Lower leg skin (tissue), 4 donors: ENCODE measurements at regions of chr5 and their contacts with region 1.

Region 1: DNA sequence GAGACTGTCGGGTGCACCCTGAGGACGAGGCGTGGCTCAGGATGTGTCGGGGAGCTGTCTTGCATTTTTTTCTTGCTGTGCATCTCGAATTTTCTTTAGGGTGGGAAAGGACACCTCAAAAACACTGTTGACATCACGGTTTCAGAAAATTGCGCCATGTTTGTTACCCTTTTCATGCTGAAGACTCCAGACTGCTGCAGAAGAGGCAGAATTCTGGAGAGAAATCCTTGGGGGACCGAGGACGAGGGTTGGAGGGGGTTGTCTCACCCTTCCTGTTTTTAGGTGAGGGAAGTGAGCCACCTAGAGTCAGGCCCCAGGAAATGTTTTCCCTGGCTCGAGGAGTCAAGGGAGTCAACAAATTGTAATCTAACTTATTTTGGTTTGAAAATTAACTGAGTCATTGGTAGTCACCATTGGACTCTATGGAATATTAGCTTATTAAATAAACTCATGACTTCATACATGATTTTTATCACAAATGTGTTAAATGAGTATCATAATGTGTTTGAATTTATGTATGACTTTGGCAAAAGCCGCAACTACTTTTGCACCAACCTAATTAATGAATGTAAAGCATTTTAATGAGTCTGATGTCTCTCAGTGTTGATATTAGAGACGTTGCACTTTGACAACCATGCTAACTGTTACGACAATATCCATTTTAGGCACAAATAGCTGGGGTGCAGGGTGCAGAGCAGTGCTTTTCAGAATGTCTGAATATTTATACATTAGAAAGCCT is 724 bp upstream of the LYSMD3 start:
- DNase-seq: peak; percentile 63 to 87
- H3K4me3 ChIP-seq: peak overlapping the region; percentile 88
- CTCF ChIP-seq: no peak
- POLR2A ChIP-seq: no peak

Region 2: DNA sequence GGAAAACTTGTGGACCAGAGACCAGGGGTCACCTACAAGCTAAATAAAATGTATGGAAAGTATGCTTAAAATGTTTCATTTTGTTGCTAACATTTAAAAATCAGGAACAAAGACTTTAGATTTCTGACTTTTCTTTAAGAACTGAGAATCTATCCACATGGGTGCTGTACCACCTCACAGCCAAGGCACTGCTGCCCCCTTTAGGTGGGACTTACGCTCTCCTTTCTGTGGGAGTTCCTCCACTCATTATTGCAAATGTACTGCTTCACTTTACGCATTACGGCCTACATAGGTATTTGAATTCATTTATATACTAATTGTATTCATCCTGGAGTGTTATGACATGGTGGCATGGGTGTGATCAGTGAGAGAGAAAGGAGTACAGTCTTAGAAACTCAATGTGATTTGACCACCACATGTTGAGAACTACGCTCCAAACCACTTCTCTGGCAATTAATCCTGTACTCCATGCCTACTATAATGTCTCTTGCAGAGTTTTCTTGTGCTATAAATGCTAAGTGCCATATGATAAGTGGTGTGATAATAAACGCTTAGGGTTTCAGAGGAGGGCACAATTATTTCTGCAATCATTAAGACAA is 95.9 kb before region 1 on chr5:
- intact Hi-C with region 1: loop called (anchors 10 kb)
- DNase-seq: no peak
- H3K4me3 ChIP-seq: no peak overlapping the region
- CTCF ChIP-seq: no peak
- POLR2A ChIP-seq: no peak

Region 3: GRCh38 chr5:90461292-90461691 is 68.8 kb before region 1 on chr5:
- intact Hi-C with region 1: no loop called
- DNase-seq: no peak
- H3K4me3 ChIP-seq: no peak overlapping the region
- CTCF ChIP-seq: no peak
- POLR2A ChIP-seq: no peak

Region 4: GRCh38 chr5:90747175-90747574 is 217.1 kb after region 1 on chr5:
- intact Hi-C with region 1: no loop called
- DNase-seq: no peak
- H3K4me3 ChIP-seq: no peak overlapping the region
- CTCF ChIP-seq: no peak
- POLR2A ChIP-seq: no peak